ENCODE measurements at regions of chr10 and their contacts with region 1.

Region 1: DNA sequence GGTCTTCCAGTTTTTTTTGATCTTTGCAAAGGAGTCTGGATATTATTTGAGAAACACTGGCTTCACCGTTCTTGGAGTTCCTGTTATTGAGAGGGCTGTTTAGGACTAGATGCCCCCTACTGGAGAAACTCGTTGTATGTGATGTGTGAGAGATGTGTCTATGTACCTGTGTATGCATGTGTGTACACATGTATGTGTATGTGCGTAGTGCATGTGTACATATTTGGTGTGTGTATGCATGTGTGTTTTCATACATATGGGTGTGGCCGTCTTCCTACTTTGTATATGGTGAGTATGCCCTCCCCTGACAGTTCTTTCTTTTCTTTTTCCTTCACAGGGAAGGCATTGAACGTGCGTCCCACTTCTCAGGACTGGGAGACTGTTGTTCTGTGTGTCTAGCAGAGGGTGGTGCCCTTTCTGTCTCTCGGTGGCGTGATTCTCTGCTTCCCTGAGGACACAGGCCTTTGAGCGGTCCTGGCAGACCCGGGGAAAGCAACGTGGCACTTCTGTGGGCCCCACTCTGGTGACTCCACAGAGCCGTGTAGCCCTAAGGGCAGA is 3.0 kb upstream of the CALHM3 start:
- DNase-seq: peak; percentile 82
- ATAC-seq: peak; percentile 81
- H3K4me3 ChIP-seq: no peak overlapping the region
- H3K4me3 Mint-ChIP-seq: no peak overlapping the region
- H3K27ac ChIP-seq: no peak overlapping the region
- H3K27ac Mint-ChIP-seq: peak overlapping the region; percentile 7
- H3K4me1 ChIP-seq: peaks cover 0 to 13% of the 10 kb centered on the region in 2 donors
- H3K4me1 Mint-ChIP-seq: peaks cover 12% of the 10 kb centered on the region
- H3K27me3 ChIP-seq: no peaks in the 10 kb centered on the region
- H3K27me3 Mint-ChIP-seq: no peaks in the 10 kb centered on the region
- CTCF ChIP-seq: peak; percentile 81

Region 2: GRCh38 chr10:102835007-102835482 is 647.0 kb before region 1 on chr10:
- CTCF ChIA-PET with region 1: interaction called, 5 read pairs
- POLR2A ChIA-PET with region 1: no interaction called
- intact Hi-C with region 1: loop called (anchors 10 kb)
- DNase-seq: peak; percentile 82
- ATAC-seq: peak; percentile 96
- H3K4me3 ChIP-seq: no peak overlapping the region
- H3K4me3 Mint-ChIP-seq: no peak overlapping the region
- H3K27ac ChIP-seq: no peak overlapping the region
- H3K27ac Mint-ChIP-seq: no peak overlapping the region
- H3K4me1 ChIP-seq: peaks cover 0 to 4% of the 10 kb centered on the region in 2 donors
- H3K4me1 Mint-ChIP-seq: peaks cover 2% of the 10 kb centered on the region
- H3K27me3 ChIP-seq: peaks cover 0 to 11% (median 2%) of the 10 kb centered on the region in 4 experiments
- H3K27me3 Mint-ChIP-seq: peaks cover 6% of the 10 kb centered on the region
- CTCF ChIP-seq: peak; percentile 89

Region 3: DNA sequence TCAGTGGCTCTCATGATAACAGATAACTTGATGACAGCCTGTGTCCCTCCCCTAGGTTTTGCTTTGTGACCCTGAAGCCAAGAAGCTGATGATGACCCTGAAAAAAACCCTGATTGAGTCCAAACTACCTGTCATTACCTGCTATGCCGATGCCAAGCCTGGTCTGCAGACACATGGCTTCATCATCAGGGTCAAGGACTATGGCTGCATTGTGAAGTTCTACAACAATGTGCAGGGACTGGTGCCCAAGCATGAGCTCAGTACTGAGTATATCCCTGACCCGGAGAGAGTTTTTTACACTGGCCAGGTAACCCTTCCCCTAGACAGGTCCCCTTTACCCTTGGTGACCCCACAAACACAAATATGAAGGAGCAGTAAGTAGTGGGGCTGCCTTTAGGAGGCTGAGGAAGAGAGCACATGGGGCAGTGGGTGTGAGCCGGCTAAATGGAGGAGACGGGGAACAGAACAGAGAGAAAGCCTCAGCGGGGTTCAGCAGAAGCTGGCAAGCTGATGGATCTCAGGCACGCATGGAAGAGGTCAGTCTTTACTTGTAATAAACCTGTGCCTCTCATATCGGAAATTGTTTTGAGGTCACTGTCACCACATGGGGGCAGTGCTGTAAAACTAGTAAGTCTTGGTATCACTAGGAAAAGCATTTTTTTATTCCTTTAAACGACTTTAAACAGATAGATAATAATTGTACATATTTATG is 65.5 kb before region 1 on chr10:
- CTCF ChIA-PET with region 1: interaction called, 345 read pairs
- POLR2A ChIA-PET with region 1: interaction called, 13 read pairs
- intact Hi-C with region 1: loop called (anchors 1 kb)
- DNase-seq: peak; percentile 76
- ATAC-seq: peak; percentile 53
- H3K4me3 ChIP-seq: no peak overlapping the region
- H3K4me3 Mint-ChIP-seq: no peak overlapping the region
- H3K27ac ChIP-seq: no peak overlapping the region
- H3K27ac Mint-ChIP-seq: no peak overlapping the region
- H3K4me1 ChIP-seq: no peaks in the 10 kb centered on the region
- H3K4me1 Mint-ChIP-seq: no peaks in the 10 kb centered on the region
- H3K27me3 ChIP-seq: no peaks in the 10 kb centered on the region
- H3K27me3 Mint-ChIP-seq: no peaks in the 10 kb centered on the region
- CTCF ChIP-seq: peak; percentile 84

Region 4: GRCh38 chr10:103428989-103429643 is 52.9 kb before region 1 on chr10:
- CTCF ChIA-PET with region 1: interaction called, 34 read pairs
- POLR2A ChIA-PET with region 1: no interaction called
- intact Hi-C with region 1: no loop called
- DNase-seq: no peak
- ATAC-seq: no peak
- H3K4me3 ChIP-seq: no peak overlapping the region
- H3K4me3 Mint-ChIP-seq: no peak overlapping the region
- H3K27ac ChIP-seq: peak overlapping the region in 1 of 2 donors; percentile 28
- H3K27ac Mint-ChIP-seq: no peak overlapping the region
- H3K4me1 ChIP-seq: no peaks in the 10 kb centered on the region
- H3K4me1 Mint-ChIP-seq: no peaks in the 10 kb centered on the region
- H3K27me3 ChIP-seq: no peaks in the 10 kb centered on the region
- H3K27me3 Mint-ChIP-seq: no peaks in the 10 kb centered on the region
- CTCF ChIP-seq: no peak

Region 5: GRCh38 chr10:103442031-103442461 is 40.0 kb before region 1 on chr10:
- CTCF ChIA-PET with region 1: interaction called, 10 read pairs
- POLR2A ChIA-PET with region 1: no interaction called
- intact Hi-C with region 1: no loop called
- DNase-seq: no peak
- ATAC-seq: no peak
- H3K4me3 ChIP-seq: no peak overlapping the region
- H3K4me3 Mint-ChIP-seq: no peak overlapping the region
- H3K27ac ChIP-seq: no peak overlapping the region
- H3K27ac Mint-ChIP-seq: peak overlapping the region; percentile 26
- H3K4me1 ChIP-seq: no peaks in the 10 kb centered on the region
- H3K4me1 Mint-ChIP-seq: no peaks in the 10 kb centered on the region
- H3K27me3 ChIP-seq: no peaks in the 10 kb centered on the region
- H3K27me3 Mint-ChIP-seq: no peaks in the 10 kb centered on the region
- CTCF ChIP-seq: no peak

Region 6: DNA sequence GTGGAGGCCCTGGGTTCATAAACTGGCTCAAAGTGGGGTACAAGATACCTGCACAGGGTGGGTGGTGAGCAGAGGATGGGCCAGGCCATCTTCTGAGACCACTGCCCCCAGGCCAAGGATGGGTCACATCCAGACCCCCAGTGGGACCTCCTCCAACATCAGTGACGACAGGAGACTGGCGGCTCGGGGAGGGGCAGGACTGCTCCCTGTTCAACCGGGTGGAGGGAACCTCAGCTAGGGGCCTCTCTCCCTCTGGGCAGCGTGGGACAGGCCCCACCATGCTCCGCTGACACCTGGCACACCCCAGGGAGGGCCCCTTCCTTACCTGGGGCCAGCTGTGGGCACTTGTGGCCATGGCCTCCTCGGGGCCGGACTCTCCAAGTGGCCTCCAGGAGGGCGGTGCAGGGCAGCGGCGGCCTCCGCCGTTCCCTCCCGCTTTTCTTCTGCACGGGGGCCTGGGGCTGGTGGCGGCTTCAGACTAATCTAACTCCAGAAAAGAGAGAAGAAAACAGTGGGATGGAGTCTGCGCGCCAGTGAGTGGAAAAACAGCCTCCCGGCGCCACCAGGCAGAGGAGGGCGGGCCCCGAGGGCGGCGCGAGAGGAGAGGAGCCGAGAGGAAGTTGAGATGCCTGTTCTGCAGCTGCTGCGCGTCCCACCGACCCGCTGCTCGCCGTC is 30.1 kb before region 1 on chr10 and contains the start of gene CALHM2:
- CTCF ChIA-PET with region 1: interaction called, 32 read pairs
- POLR2A ChIA-PET with region 1: interaction called, 6 read pairs
- intact Hi-C with region 1: loop called (anchors 1 kb)
- DNase-seq: peak; percentile 65
- ATAC-seq: peak; percentile 86
- H3K4me3 ChIP-seq: peak within 1 kb of the TSS; percentile 22 to 91 (median 64)
- H3K4me3 Mint-ChIP-seq: peak within 1 kb of the TSS; percentile 93
- H3K27ac ChIP-seq: peak within 1 kb of the TSS; percentile 24 to 71
- H3K27ac Mint-ChIP-seq: peak within 1 kb of the TSS; percentile 91
- H3K4me1 ChIP-seq: peaks cover 20 to 39% of the 10 kb centered on the region in 2 donors
- H3K4me1 Mint-ChIP-seq: peaks cover 42% of the 10 kb centered on the region
- H3K27me3 ChIP-seq: peaks cover 0 to 6% (median 0%) of the 10 kb centered on the region in 4 experiments
- H3K27me3 Mint-ChIP-seq: no peaks in the 10 kb centered on the region
- CTCF ChIP-seq: no peak
- total RNA-seq, gene CALHM2: 42.8 and 46.2 TPM in 2 replicates

Region 7: DNA sequence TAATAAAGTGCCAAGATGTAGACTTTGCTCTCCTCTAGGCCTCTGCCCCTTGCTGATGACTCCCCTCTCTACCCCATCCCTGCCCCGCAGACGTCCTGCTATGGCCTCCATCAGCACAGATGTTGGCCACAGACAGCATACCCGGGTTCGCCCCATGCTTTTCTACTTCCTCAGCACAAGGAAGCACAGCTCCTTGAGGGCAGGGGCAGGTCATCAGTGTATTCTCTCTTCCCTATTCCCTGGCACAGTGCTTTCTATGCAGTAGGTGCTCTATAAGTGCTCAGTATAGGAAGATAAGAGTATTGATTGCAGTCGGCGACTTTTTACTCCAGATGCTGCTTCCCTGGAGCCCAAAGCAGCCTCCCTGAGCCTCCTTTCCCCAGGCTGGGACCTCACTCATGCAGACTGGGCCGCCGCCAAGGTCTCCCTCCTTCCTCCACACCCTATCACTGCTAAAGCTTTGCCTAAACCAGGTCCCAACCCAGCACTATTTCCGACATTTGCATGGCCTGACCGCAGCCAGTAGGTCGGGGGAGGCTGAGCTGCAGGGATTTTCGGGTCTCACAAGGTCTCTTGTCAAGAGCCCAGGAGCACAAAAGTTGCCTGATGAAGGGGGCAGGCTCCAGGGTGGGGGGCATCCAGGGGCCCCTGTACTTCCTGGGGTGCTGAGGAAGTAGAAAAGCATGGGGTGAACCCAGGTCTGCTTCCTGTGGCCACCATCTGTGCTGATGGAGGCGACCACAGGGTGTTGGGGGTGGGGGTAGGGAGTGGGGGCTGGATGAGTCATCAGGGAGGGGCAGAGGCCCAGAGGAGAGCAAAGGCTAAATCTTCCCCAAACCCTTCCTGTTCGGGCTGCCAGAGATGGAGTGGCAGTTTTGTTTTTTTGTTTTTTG is 11.0 kb before region 1 on chr10:
- CTCF ChIA-PET with region 1: interaction called, 13 read pairs
- POLR2A ChIA-PET with region 1: interaction called, 6 read pairs
- intact Hi-C with region 1: loop called (anchors 1 kb)
- DNase-seq: peak; percentile 85
- ATAC-seq: peak; percentile 78
- H3K4me3 ChIP-seq: peak overlapping the region in 3 of 5 experiments; percentile 15 to 35 (median 31)
- H3K4me3 Mint-ChIP-seq: peak overlapping the region; percentile 79
- H3K27ac ChIP-seq: peak overlapping the region; percentile 69 to 78
- H3K27ac Mint-ChIP-seq: peak overlapping the region; percentile 96
- H3K4me1 ChIP-seq: peaks cover 40 to 70% of the 10 kb centered on the region in 2 donors
- H3K4me1 Mint-ChIP-seq: peaks cover 71% of the 10 kb centered on the region
- H3K27me3 ChIP-seq: no peaks in the 10 kb centered on the region
- H3K27me3 Mint-ChIP-seq: no peaks in the 10 kb centered on the region
- CTCF ChIP-seq: no peak